ENCODE measurements at regions of chr17 and their contacts with region 1.

Region 1: GRCh38 chr17:63113183-63113582 is 147.1 kb downstream of the TANC2 start:
- DNase-seq: no peak
- H3K4me3 ChIP-seq: no peak overlapping the region
- H3K27ac ChIP-seq: no peak overlapping the region
- H3K4me1 ChIP-seq: peaks cover 10 to 21% of the 10 kb centered on the region in 2 experiments; a peak in 3 of 4 replicates
- H3K27me3 ChIP-seq: no peaks in the 10 kb centered on the region
- CTCF ChIP-seq: peak; percentile 47
- EP300 ChIP-seq: no peak
- RAD21 ChIP-seq: peak; percentile 45

Region 2: GRCh38 chr17:63132459-63132911 is 19.3 kb after region 1 on chr17:
- CTCF ChIA-PET with region 1: interaction called, 16 read pairs
- POLR2A ChIA-PET with region 1: no interaction called
- DNase-seq: no peak
- H3K4me3 ChIP-seq: no peak overlapping the region
- H3K27ac ChIP-seq: 0 out of 4 replicates have a peak overlapping the region, but pooled peaks of 1 of the 2 experiments have one; percentile 14
- H3K4me1 ChIP-seq: peaks cover 0 to 4% of the 10 kb centered on the region in 2 experiments; a peak in 3 of 4 replicates
- H3K27me3 ChIP-seq: no peaks in the 10 kb centered on the region
- CTCF ChIP-seq: no peak
- EP300 ChIP-seq: no peak
- RAD21 ChIP-seq: no peak

Region 3: GRCh38 chr17:63140255-63140654 is 27.1 kb after region 1 on chr17:
- CTCF ChIA-PET with region 1: interaction called, 16 read pairs
- POLR2A ChIA-PET with region 1: no interaction called
- DNase-seq: no peak
- H3K4me3 ChIP-seq: no peak overlapping the region
- H3K27ac ChIP-seq: peak overlapping the region; percentile 5 to 24; a peak in 2 of 4 replicates
- H3K4me1 ChIP-seq: peaks cover 0 to 2% of the 10 kb centered on the region in 2 experiments; a peak in 2 of 4 replicates
- H3K27me3 ChIP-seq: no peaks in the 10 kb centered on the region
- CTCF ChIP-seq: no peak
- EP300 ChIP-seq: no peak
- RAD21 ChIP-seq: no peak

Region 4: GRCh38 chr17:63613663-63614062 is 500.5 kb after region 1 on chr17:
- CTCF ChIA-PET with region 1: no interaction called
- POLR2A ChIA-PET with region 1: no interaction called
- DNase-seq: no peak
- H3K4me3 ChIP-seq: no peak overlapping the region
- H3K27ac ChIP-seq: no peak overlapping the region
- H3K4me1 ChIP-seq: no peaks in the 10 kb centered on the region
- H3K27me3 ChIP-seq: no peaks in the 10 kb centered on the region
- CTCF ChIP-seq: no peak
- EP300 ChIP-seq: no peak
- RAD21 ChIP-seq: no peak